Activated CD4-positive, alpha-beta memory T cell treated with anti-CD3 and anti-CD28 coated beads for 36 hours (primary cell): ENCODE measurements at regions of chrX and their contacts with region 1.

Region 1: DNA sequence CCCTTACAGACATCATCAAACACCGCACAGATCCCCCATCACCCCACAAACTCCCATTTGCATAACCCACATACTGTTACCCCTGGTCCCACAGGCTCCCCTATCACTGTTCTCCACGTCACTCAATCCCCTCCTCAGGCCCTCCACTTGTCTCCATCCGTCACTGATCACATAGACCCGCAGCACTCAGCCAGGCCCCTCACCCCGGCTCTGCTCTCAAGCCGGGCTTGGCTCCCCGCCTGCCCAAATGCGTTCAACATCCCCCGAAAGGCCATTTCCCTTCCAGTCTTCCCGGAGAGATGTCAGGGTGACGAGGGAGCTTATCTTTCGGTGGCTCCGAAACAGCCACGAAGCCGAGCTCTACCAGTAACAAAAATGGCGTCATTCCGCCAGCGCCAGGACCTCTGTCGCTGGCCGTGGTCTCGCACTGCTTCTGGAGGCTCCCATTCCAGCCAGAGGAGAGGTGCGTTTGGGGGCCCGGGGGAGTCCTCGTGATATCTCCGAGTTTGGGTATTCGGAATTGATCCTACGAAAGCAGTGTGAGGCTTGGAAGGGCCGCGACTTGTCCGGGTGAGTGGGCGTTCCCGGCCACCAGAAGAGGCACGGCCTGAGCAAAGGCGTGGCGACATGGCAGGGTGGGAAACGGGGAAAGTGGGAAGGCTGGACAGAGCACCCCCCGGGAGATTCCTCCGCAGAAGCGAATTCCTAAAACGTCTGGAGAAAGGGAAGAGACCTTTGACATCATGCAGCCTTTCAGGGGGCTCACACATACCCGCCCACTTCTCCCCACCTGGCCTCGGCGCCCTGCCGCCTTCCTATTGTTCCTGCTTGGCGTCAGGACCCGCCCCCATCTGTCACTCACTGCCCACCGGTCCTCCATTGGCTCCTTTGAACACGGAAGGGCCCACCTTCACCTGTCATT is at the start of gene ZNF630:
- DNase-seq: peak; percentile 79
- H3K4me3 Mint-ChIP-seq: peak within 1 kb of the TSS; percentile 85
- H3K27ac Mint-ChIP-seq: peak within 1 kb of the TSS; percentile 87
- H3K4me1 Mint-ChIP-seq: peaks cover 8% of the 10 kb centered on the region
- H3K27me3 Mint-ChIP-seq: no peaks in the 10 kb centered on the region
- total RNA-seq, gene ZNF630: 1.5 to 2.4 TPM

Region 2: DNA sequence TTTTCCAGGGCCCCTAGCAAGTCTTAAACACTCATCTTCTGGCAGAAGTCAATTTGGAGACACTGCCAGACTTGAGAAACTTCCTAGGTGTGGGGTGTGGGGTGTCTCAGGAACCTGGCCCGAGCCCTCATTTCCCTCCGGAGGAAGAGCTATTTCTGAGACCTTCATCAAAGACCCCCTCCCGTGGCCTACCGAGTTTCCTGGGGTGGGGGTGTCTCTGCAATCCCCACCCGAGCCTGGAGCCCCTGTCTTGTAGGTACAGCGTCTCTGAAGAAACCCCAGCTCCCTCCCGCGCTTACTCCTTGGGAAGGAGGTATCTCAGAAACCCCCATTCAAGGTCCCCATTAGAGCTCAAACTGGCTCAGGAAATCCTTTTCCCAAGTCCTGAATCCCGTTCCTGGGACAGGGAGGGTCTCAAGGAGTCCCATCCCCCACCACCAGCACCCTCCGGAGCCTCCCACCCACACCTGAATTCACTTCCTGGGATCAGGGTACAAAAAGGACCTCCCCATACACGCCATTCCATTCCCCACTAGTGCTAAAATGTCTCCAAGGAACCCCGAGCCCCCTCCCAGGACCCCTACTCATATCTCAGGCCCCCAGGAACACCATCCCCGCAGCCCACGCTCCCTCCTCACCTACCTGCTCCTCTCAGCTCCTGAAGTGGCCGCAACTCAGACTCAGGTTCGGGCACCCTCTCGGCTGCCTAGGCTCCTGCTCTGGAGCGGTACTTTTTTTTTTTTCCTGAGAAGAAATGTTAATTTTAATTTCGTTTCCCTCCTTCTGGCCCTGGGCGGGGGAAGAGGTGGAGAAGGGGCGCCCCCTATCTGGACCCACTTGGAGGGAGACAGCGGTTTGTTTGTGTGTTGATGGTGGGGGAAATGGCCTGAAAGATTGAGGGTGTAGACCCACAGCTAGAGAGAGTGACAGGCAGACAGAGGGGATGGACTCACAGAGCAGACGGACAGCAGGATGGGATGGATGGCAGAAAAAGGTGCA is 397.7 kb after region 1 on chrX:
- CTCF ChIA-PET with region 1: no interaction called
- POLR2A ChIA-PET with region 1: no interaction called
- intact Hi-C with region 1: loop called (anchors 5 kb)
- DNase-seq: peak; percentile 62
- H3K4me3 Mint-ChIP-seq: peak overlapping the region; percentile 95
- H3K27ac Mint-ChIP-seq: peak overlapping the region; percentile 93
- H3K4me1 Mint-ChIP-seq: peaks cover 34% of the 10 kb centered on the region
- H3K27me3 Mint-ChIP-seq: no peaks in the 10 kb centered on the region